Mammary epithelial cell (primary cell): ENCODE measurements at regions of chr12 and their contacts with region 1.

Region 1: GRCh38 chr12:6470375-6471163 is at the start of gene VAMP1:
- DNase-seq: peak; percentile 97
- H3K4me3 ChIP-seq: peak within 1 kb of the TSS; percentile 64 to 83 (median 65)
- H3K27ac ChIP-seq: peak within 1 kb of the TSS; percentile 55
- H3K4me1 ChIP-seq: peaks cover 12% of the 10 kb centered on the region
- H3K27me3 ChIP-seq: no peaks in the 10 kb centered on the region
- CTCF ChIP-seq: no peak
- total RNA-seq, gene VAMP1: 2.1 to 5.0 TPM

Region 2: GRCh38 chr12:6062757-6063735 is 407.5 kb before region 1 on chr12:
- CTCF ChIA-PET with region 1: no interaction called
- dilution Hi-C with region 1: no loop called
- in situ Hi-C with region 1: no loop called
- intact Hi-C with region 1: loop called (anchors 1 kb)
- DNase-seq: peak; percentile 31
- H3K4me3 ChIP-seq: no peak overlapping the region
- H3K27ac ChIP-seq: no peak overlapping the region
- H3K4me1 ChIP-seq: no peaks in the 10 kb centered on the region
- H3K27me3 ChIP-seq: no peaks in the 10 kb centered on the region
- CTCF ChIP-seq: peak; percentile 96 to 97

Region 3: GRCh38 chr12:6323340-6323994 is 147.1 kb before region 1 on chr12:
- CTCF ChIA-PET with region 1: no interaction called
- dilution Hi-C with region 1: no loop called
- in situ Hi-C with region 1: no loop called
- intact Hi-C with region 1: loop called (anchors 5 kb)
- DNase-seq: peak; percentile 89
- H3K4me3 ChIP-seq: no peak overlapping the region
- H3K27ac ChIP-seq: peak overlapping the region; percentile 5
- H3K4me1 ChIP-seq: peaks cover 16% of the 10 kb centered on the region
- H3K27me3 ChIP-seq: no peaks in the 10 kb centered on the region
- CTCF ChIP-seq: peak; percentile 46 to 59

Region 4: DNA sequence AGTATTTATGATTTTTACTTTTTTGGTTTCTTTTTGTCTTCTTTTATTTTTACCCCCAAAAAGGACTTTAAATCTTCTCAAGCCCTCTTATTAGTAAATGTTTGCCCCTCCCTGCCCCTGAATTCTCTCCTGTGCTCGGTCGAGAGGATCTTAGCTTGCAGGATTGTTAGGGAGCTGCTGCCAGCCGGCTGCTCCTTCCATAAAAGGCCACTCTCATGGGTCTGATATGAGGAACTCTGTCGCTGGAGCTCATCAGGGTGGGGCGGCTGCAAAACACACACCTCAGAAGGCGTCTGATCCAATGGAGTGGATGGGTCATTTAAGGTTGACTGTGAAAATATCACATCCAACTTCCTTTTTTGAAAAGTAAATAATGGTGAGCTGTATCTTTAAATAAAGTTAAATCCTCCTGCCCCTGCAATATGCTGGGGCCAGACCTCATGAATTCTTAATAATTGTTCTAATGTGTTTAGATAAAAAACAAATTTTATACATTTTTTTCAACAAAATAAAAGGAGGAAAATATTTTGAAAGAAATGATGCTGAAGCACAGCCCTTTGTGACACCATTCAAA is 78.0 kb before region 1 on chr12:
- CTCF ChIA-PET with region 1: no interaction called
- dilution Hi-C with region 1: loop called (anchors 5 kb)
- in situ Hi-C with region 1: no loop called
- intact Hi-C with region 1: no loop called
- DNase-seq: no peak
- H3K4me3 ChIP-seq: no peak overlapping the region
- H3K27ac ChIP-seq: no peak overlapping the region
- H3K4me1 ChIP-seq: no peaks in the 10 kb centered on the region
- H3K27me3 ChIP-seq: no peaks in the 10 kb centered on the region
- CTCF ChIP-seq: no peak

Region 5: DNA sequence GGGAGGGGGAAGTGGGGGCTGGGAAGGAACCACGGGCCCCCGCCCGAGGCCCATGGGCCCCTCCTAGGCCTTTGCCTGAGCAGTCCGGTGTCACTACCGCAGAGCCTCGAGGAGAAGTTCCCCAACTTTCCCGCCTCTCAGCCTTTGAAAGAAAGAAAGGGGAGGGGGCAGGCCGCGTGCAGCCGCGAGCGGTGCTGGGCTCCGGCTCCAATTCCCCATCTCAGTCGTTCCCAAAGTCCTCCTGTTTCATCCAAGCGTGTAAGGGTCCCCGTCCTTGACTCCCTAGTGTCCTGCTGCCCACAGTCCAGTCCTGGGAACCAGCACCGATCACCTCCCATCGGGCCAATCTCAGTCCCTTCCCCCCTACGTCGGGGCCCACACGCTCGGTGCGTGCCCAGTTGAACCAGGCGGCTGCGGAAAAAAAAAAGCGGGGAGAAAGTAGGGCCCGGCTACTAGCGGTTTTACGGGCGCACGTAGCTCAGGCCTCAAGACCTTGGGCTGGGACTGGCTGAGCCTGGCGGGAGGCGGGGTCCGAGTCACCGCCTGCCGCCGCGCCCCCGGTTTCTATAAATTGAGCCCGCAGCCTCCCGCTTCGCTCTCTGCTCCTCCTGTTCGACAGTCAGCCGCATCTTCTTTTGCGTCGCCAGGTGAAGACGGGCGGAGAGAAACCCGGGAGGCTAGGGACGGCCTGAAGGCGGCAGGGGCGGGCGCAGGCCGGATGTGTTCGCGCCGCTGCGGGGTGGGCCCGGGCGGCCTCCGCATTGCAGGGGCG is 63.5 kb after region 1 on chr12 and contains the start of gene GAPDH:
- CTCF ChIA-PET with region 1: interaction called, 8 read pairs
- dilution Hi-C with region 1: no loop called
- in situ Hi-C with region 1: no loop called
- intact Hi-C with region 1: loop called (anchors 1 kb)
- DNase-seq: peak; percentile 97
- H3K4me3 ChIP-seq: peak within 1 kb of the TSS; percentile 64 to 92 (median 91)
- H3K27ac ChIP-seq: peak within 1 kb of the TSS; percentile 91
- H3K4me1 ChIP-seq: peaks cover 47% of the 10 kb centered on the region
- H3K27me3 ChIP-seq: no peaks in the 10 kb centered on the region
- CTCF ChIP-seq: no peak
- total RNA-seq, gene GAPDH: 6,493 to 13,434 TPM